ENCODE measurements at regions of chr3 and their contacts with region 1.

Region 1: GRCh38 chr3:196988241-196989029 is 19.8 kb upstream of the PIGZ start:
- DNase-seq: peak; percentile 78 to 97 (median 90)
- ATAC-seq: peak; percentile 98
- H3K4me3 ChIP-seq: no peak overlapping the region
- H3K27ac ChIP-seq: peak overlapping the region; percentile 59
- H3K4me1 ChIP-seq: peaks cover 18 to 44% of the 10 kb centered on the region in 2 experiments
- H3K27me3 ChIP-seq: no peaks in the 10 kb centered on the region
- CTCF ChIP-seq: peak; percentile 40 to 65 (median 54); a peak in 5 of 6 replicates
- EP300 ChIP-seq: peak; percentile 87
- POLR2A ChIP-seq: no peak
- RAD21 ChIP-seq: peak in 1 of 2 experiments; percentile 23; a peak in 2 of 4 replicates

Region 2: DNA sequence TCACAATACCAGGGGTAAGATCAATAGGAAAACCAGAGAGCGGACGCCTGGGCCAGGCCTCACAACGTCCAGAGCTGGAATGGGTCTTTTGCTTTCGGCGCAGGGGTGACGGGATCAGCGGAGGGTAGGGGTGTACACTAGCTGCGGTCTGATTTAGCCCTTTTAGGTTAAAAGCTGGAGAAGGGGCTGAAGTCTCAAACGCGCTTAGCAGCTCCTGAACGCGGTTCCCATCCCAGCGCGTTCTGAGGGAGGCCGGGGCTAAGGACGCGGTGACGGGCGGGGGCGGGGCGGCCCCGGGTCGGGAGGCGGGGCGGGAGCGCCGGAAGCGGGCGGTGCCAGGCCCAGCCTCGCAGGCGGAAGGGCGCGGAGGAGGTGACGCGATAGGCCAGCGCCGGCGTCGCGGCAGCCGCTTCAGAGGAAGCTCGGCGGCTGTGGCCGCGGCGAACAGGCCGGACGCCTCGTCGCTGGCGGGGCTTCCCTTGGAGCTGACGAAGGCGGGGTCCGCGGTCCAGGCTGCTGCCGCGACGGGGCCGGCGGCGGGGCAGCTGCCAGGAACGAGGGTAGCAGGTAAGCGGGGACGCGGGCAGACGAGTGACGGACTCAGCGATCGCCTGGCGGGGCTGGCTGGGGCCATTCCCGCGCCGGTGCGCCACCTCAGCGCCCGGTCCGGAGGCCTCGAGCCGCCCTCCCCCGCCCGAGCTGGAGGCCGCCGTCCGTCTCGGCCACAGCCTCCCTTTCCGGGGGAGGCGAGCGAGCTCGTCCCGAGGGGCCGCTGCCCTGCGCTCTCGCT is 120.7 kb before region 1 on chr3 and contains the start of gene SENP5:
- CTCF ChIA-PET with region 1: no interaction called
- POLR2A ChIA-PET with region 1: no interaction called
- in situ Hi-C with region 1: no loop called
- intact Hi-C with region 1: no loop called
- DNase-seq: peak; percentile 93 to 95 (median 94)
- ATAC-seq: peak; percentile 96
- H3K4me3 ChIP-seq: peak within 1 kb of the TSS; percentile 98
- H3K27ac ChIP-seq: peak within 1 kb of the TSS; percentile 86
- H3K4me1 ChIP-seq: peaks cover 2 to 21% of the 10 kb centered on the region in 2 experiments; a peak in 3 of 5 replicates
- H3K27me3 ChIP-seq: no peaks in the 10 kb centered on the region
- CTCF ChIP-seq: 0 out of 6 replicates have a peak, but pooled peaks of 1 of the 3 experiments have one; percentile 0
- EP300 ChIP-seq: no peak
- POLR2A ChIP-seq: peak; percentile 93
- RAD21 ChIP-seq: no peak
- polyA plus RNA-seq, gene SENP5: 18.3 to 24.8 TPM

Region 3: GRCh38 chr3:197501879-197502620 is 513.6 kb after region 1 on chr3:
- CTCF ChIA-PET with region 1: no interaction called
- POLR2A ChIA-PET with region 1: no interaction called
- in situ Hi-C with region 1: loop called (anchors 25 kb)
- intact Hi-C with region 1: no loop called
- DNase-seq: no peak
- ATAC-seq: peak; percentile 62
- H3K4me3 ChIP-seq: no peak overlapping the region
- H3K27ac ChIP-seq: no peak overlapping the region
- H3K4me1 ChIP-seq: peaks cover 6 to 17% of the 10 kb centered on the region in 2 experiments; a peak in 4 of 5 replicates
- H3K27me3 ChIP-seq: peaks cover 0 to 13% of the 10 kb centered on the region in 2 experiments; a peak in 4 of 5 replicates
- CTCF ChIP-seq: peak; percentile 35 to 57 (median 37); a peak in 4 of 6 replicates
- EP300 ChIP-seq: no peak
- POLR2A ChIP-seq: no peak
- RAD21 ChIP-seq: peak; percentile 21 to 60; a peak in 2 of 4 replicates